Mucosa of descending colon (tissue), 3 donors: ENCODE measurements at regions of chr20 and their contacts with region 1.

Region 1: DNA sequence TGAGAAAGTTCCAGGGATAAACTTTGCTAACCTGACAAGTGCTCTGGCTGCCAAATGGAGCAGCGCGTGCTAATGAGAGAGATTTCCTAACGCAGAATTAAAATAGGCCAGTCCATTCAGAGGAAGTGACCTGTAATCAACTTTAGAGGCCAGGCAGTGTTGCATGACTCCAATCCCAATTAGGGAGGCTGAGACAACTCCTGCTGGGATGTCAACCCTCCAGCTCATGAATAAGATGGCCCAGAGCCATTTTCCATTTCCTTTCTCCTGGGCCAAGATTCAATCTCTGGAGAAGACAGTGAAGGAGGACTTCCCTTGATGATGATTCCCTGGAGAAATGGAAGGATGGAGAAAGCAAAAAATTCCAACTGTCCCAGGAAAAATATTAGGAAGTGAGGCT is 241.5 kb upstream of the RNF24 start:
- DNase-seq: no peak
- ATAC-seq: no peak
- H3K4me3 ChIP-seq: no peak overlapping the region
- H3K4me1 ChIP-seq: no peaks in the 10 kb centered on the region
- CTCF ChIP-seq: no peak

Region 2: GRCh38 chr20:3911956-3912355 is 344.9 kb before region 1 on chr20:
- intact Hi-C with region 1: no loop called
- DNase-seq: peak; percentile 53 to 74 (median 69)
- ATAC-seq: peak; percentile 83
- H3K4me3 ChIP-seq: no peak overlapping the region
- H3K4me1 ChIP-seq: peaks cover 32% of the 10 kb centered on the region
- CTCF ChIP-seq: no peak

Region 3: GRCh38 chr20:4160761-4161305 is 96.0 kb before region 1 on chr20:
- intact Hi-C with region 1: no loop called
- DNase-seq: peak in 2 of 3 donors; percentile 42 to 56
- ATAC-seq: peak; percentile 8
- H3K4me3 ChIP-seq: no peak overlapping the region
- H3K4me1 ChIP-seq: peaks cover 11% of the 10 kb centered on the region
- CTCF ChIP-seq: no peak

Region 4: GRCh38 chr20:4585104-4585753 is 328.4 kb after region 1 on chr20:
- intact Hi-C with region 1: loop called in 1 of 2 experiments (anchors 10 kb)
- DNase-seq: no peak
- ATAC-seq: no peak
- H3K4me3 ChIP-seq: no peak overlapping the region
- H3K4me1 ChIP-seq: no peaks in the 10 kb centered on the region
- CTCF ChIP-seq: no peak